ENCODE measurements at regions of chr6 and their contacts with region 1.

Region 1: DNA sequence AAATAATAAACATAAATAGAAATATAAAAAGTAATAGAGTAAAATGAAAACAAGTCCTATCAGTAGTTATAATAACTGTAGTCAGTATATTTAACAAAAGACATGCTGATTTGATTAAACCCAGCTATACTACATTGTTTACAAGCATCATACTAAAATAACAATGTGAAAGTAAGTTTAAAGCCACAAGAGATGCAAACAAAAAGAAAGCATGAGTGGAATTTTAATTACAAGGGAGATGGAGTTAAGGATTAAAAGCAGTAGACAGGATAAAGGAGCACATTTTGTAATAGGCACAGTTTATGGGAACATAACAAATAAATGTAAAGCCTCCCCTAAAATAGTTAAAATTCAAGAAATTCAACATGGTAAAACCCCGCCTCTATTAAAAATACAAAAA is 41.5 kb downstream of the SENP6 start:
- DNase-seq: no peak
- H3K4me3 ChIP-seq: no peak overlapping the region
- H3K27ac ChIP-seq: no peak overlapping the region
- H3K4me1 ChIP-seq: no peaks in the 10 kb centered on the region
- H3K27me3 ChIP-seq: no peaks in the 10 kb centered on the region
- CTCF ChIP-seq: no peak
- POLR2A ChIP-seq: no peak

Region 2: DNA sequence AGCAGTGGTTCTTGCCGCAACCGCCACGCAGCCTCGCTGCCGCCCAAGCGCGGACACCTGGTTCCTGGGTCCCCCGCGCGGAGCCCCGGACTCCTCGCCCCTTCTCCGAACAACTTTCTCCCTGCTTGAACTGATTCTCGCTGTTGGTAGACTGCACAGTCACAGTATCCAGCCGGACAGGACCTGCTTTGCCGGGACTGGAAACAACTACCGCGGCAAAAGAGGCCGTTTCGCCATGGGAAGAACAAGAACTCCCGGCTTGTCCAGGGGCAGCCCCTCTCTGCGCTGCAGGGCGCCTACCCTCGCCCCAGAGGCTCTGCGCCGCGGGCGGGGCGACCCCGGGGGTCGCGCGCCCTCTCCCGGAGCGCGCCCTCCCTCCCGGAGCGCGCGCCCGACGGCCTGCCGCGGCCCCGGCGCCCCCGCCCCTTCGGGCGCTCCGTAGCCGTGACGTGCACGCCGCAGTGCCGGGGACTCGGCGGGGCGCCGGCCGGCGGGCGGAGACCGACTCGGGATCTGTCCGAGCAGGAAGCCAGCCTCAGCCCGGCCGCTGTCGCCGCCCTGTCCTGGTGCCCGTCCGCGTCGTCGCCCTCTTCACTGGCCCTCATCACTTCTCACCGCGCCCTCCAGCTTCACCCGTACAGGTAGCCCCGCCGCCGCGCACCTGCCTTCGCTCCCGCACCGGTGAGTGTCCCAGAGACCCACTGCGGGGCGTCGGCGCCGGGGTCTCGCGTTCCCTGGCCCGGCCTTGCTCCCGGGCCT is 105.7 kb after region 1 on chr6 and contains the start of gene MYO6:
- intact Hi-C with region 1: loop called in 1 of 2 experiments (anchors 5 kb)
- DNase-seq: peak; percentile 69 to 79 (median 75)
- H3K4me3 ChIP-seq: peak within 1 kb of the TSS; percentile 46 to 94 (median 90)
- H3K27ac ChIP-seq: peak within 1 kb of the TSS; percentile 45 to 91 (median 77)
- H3K4me1 ChIP-seq: peaks cover 0 to 12% of the 10 kb centered on the region in 2 donors
- H3K27me3 ChIP-seq: no peaks in the 10 kb centered on the region
- CTCF ChIP-seq: no peak
- POLR2A ChIP-seq: peak; percentile 84 to 88
- total RNA-seq, gene MYO6: 11.1 to 27.1 (median 15.6) TPM

Measured in adrenal gland (tissue), 19 donors.